WTC11 (cell line): ENCODE measurements at regions of chr7 and their contacts with region 1.

Region 1: GRCh38 chr7:33904681-33905388 is 504 bp upstream of the BMPER start:
- DNase-seq: peak; percentile 61
- ATAC-seq: peak; percentile 74
- H3K4me3 Mint-ChIP-seq: peak overlapping the region; percentile 91
- H3K27ac Mint-ChIP-seq: no peak overlapping the region
- H3K4me1 Mint-ChIP-seq: peaks cover 29% of the 10 kb centered on the region
- H3K27me3 Mint-ChIP-seq: peaks cover 61% of the 10 kb centered on the region
- CTCF ChIP-seq: no peak

Region 2: GRCh38 chr7:33886149-33886623 is 18.6 kb before region 1 on chr7:
- CTCF ChIA-PET with region 1: interaction called, 27 read pairs
- POLR2A ChIA-PET with region 1: no interaction called
- DNase-seq: peak; percentile 78
- ATAC-seq: peak; percentile 89
- H3K4me3 Mint-ChIP-seq: no peak overlapping the region
- H3K27ac Mint-ChIP-seq: no peak overlapping the region
- H3K4me1 Mint-ChIP-seq: peaks cover 23% of the 10 kb centered on the region
- H3K27me3 Mint-ChIP-seq: no peaks in the 10 kb centered on the region
- CTCF ChIP-seq: peak; percentile 33; the same call in 1 of the 2 replicates